Dorsolateral prefrontal cortex (tissue), 120 donors: ENCODE measurements at regions of chr1 and their contacts with region 1.

Region 1: GRCh38 chr1:17606826-17607440 is 67.4 kb downstream of the ARHGEF10L start:
- DNase-seq: peak; percentile 61 to 82 (median 76)
- H3K4me3 ChIP-seq: no peak overlapping the region
- H3K27ac ChIP-seq: peak overlapping the region in 18 of 59 donors; percentile 6 to 76 (median 54)
- H3K27me3 ChIP-seq: no peaks in the 10 kb centered on the region
- CTCF ChIP-seq: peak; percentile 75 to 98 (median 95)

Region 2: DNA sequence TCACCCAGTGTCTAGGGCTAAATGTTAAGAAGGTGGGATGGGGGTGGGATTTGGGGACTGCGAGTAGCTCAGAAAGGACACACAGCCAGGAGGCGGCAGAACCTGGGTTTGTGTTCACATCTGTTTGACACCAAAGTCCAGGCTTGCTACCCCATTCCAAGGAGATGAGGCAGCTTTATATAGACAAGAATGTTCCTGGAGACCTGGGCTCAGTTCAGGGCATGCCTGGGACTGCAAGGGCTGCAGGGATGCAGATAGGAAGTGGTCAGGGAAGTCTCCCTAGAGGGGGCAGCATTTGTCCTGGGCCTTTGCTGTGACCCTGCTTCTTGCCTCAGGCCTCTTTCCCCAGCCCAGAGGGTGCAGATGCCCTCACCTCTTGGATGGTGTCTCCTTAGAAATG is 341.8 kb before region 1 on chr1:
- intact Hi-C with region 1: no loop called
- DNase-seq: no peak
- H3K4me3 ChIP-seq: no peak overlapping the region
- H3K27ac ChIP-seq: no peak overlapping the region
- H3K27me3 ChIP-seq: peaks cover 0 to 3% (median 0%) of the 10 kb centered on the region in 45 donors
- CTCF ChIP-seq: no peak

Region 3: DNA sequence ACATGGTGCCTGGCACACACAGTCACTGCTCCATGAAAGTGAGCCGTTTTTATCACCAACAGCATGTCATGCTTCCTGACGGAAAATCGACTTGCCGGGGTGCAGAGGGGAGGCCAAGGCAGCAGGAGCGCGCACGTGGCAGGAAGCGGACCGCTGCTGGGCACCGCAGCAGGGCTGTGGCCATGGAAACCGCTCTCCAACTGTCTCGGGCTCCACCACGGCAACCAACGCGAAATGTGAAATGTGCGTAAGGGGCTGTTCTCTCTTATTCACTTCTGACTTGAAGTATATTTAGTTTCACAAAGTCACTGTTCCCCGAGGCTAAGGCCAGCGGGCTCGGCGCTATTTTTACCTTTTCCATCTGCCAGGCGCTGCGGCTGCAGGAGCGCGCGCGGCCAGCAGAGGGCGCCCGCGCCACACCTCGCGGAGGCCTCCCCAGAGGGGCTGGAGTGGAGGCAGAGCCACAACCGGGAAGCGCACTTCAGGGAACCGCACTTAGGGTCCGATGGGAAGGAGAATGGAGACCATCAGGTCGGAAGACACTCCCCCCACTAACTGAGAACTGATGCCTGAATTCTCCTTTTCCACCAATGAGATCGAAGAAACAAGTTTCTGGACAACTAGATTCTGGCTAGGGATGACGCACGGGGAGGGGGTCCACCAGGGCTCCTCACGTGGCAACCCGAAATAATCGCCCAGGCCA is 187.2 kb before region 1 on chr1:
- intact Hi-C with region 1: loop called (anchors 5 kb)
- DNase-seq: peak in 9 of 10 donors; percentile 56 to 87 (median 68)
- H3K4me3 ChIP-seq: peak overlapping the region in 19 of 59 donors; percentile 2 to 33 (median 16)
- H3K27ac ChIP-seq: peak overlapping the region in 23 of 59 donors; percentile 3 to 69 (median 26)
- H3K27me3 ChIP-seq: no peaks in the 10 kb centered on the region
- CTCF ChIP-seq: peak; percentile 93 to 100 (median 98)

Region 4: DNA sequence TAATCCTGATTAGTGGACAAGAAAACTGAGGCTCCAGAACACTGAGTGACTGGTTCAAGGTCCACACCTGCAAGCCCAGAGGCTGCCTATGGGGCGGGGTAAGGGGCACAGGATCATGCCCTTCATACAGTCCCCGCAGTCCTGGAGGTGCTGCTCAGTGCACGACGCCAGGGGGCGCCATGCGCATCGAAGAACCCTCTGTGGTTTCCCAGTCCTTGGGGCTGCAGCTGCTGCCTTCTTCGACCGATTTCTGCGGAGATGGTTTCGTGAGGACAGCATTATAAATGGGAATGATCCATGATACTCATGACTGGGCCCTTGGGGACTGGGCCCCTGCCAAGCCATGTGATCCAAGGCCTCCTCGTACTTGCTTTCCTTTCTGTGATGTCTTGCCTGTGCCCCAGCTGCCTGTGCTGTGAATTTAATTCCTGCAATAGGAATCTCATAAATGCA is 104.6 kb before region 1 on chr1:
- intact Hi-C with region 1: loop called (anchors 1 to 2 kb)
- DNase-seq: peak; percentile 70 to 90 (median 82)
- H3K4me3 ChIP-seq: peak overlapping the region in 1 of 59 donors; percentile 15
- H3K27ac ChIP-seq: peak overlapping the region in 5 of 59 donors; percentile 23 to 43 (median 28)
- H3K27me3 ChIP-seq: no peaks in the 10 kb centered on the region
- CTCF ChIP-seq: peak; percentile 64 to 98 (median 93)

Region 5: DNA sequence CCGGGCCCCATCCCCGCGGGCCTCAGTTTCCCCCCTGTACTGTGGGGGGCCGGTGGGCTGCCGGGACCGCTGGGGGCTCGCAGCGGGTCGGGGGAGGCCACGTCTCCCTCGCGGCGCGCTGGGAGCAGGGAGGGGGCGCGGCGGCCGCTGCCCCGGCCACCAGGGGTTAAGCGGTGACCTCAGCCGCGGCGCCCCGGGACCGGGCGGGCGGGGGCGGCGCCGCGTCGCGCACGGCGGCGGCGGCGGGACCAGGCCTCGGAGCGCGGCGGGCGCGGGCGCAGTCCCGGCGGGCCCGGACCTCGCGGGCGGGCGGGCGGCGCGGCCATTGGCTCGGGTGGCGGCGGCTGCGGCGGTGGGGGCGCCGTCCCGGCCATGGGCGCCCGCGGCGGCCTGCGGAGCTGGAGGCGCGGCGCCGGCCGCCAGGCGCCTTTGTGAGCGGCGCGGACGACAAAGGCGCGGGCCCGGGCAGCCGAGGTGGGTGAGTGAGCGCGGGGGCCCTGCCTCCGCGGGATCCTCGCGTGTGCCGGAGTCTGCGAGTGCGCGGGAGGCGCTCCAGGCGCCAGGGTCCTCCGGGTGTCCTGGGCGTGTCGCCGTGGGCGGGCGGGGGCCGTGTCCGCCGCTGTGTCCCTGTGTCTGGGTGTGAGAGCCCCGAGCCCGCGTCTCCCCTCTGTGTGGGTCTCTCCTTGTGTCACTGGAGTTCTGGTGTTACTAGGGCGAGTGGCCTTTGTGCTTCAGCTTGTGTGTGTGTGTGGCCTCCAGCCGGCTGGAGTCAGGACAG is 67.3 kb before region 1 on chr1 and contains the start of gene ARHGEF10L:
- intact Hi-C with region 1: loop called in 1 of 2 experiments (anchors 2 kb)
- DNase-seq: peak in 2 of 10 donors; percentile 50 to 59
- H3K4me3 ChIP-seq: peak within 1 kb of the TSS; percentile 58 to 91 (median 81)
- H3K27ac ChIP-seq: peak within 1 kb of the TSS in 53 of 59 donors; percentile 19 to 97 (median 78)
- H3K27me3 ChIP-seq: no peaks in the 10 kb centered on the region
- CTCF ChIP-seq: no peak
- total RNA-seq, gene ARHGEF10L: 25.8 to 86.0 (median 36.9) TPM

Region 6: GRCh38 chr1:17587989-17588685 is 18.8 kb before region 1 on chr1:
- intact Hi-C with region 1: no loop called
- DNase-seq: no peak
- H3K4me3 ChIP-seq: no peak overlapping the region
- H3K27ac ChIP-seq: peak overlapping the region in 33 of 59 donors; percentile 5 to 70 (median 45)
- H3K27me3 ChIP-seq: no peaks in the 10 kb centered on the region
- CTCF ChIP-seq: no peak

Region 7: GRCh38 chr1:17719874-17720273 is 112.9 kb after region 1 on chr1:
- intact Hi-C with region 1: no loop called
- DNase-seq: no peak
- H3K4me3 ChIP-seq: no peak overlapping the region
- H3K27ac ChIP-seq: no peak overlapping the region
- H3K27me3 ChIP-seq: peaks cover 0 to 11% (median 0%) of the 10 kb centered on the region in 45 donors
- CTCF ChIP-seq: no peak